Adrenal gland (tissue), 19 donors: ENCODE measurements at regions of chr10 and their contacts with region 1.

Region 1: GRCh38 chr10:25226775-25227682 is 52.2 kb downstream of the GPR158 start:
- DNase-seq: peak; percentile 24 to 67 (median 35)
- H3K4me3 ChIP-seq: no peak overlapping the region
- H3K27ac ChIP-seq: no peak overlapping the region
- H3K4me1 ChIP-seq: no peaks in the 10 kb centered on the region
- H3K27me3 ChIP-seq: no peaks in the 10 kb centered on the region
- CTCF ChIP-seq: peak; percentile 39 to 62 (median 54)
- POLR2A ChIP-seq: no peak

Region 2: GRCh38 chr10:24806262-24806661 is 420.8 kb before region 1 on chr10:
- intact Hi-C with region 1: no loop called
- DNase-seq: peak in 1 of 7 donors; percentile 24
- H3K4me3 ChIP-seq: no peak overlapping the region
- H3K27ac ChIP-seq: no peak overlapping the region
- H3K4me1 ChIP-seq: no peaks in the 10 kb centered on the region
- H3K27me3 ChIP-seq: no peaks in the 10 kb centered on the region
- CTCF ChIP-seq: no peak
- POLR2A ChIP-seq: no peak

Region 3: DNA sequence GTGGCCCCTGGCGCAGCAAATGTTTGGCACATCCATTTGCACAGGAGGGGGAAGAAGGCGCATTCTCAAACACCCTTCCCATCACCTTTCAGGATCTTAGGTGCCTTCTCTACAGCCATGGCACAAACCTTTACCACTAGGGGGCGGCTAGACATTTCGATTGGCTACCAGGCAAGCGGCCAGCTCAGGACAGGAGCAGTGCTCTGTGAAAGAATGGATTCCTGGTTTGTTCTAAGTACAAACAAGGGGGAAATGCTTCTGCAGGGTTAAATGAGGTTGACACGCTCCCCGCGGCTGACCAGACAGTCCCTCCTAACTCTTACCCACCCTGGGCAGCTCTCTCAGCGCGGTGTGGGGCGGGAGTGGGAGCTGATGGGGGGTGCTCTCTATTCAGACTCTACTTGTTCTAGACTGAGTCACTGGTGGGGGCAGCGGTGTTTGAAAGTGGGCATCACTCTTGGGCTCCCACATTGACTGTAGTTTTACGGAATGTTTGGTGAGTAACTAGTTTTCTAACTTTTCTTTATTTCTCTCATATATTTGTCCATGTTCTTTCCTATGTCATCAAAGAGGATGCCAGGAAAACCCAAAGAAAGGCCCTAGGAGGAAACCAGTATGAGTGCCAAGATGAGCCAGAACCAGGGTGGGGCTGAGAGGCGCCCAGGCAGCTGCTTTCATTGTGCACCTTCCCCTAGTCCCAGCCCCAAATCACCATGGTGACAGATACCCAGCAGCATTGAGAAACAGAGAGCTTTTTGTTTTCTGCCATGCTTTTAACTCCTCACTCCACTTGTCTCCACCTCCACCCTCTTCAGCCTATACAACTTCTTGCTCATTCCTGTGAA is 113.6 kb before region 1 on chr10:
- intact Hi-C with region 1: loop called in 1 of 2 experiments (anchors 5 kb)
- DNase-seq: peak; percentile 71 to 93 (median 85)
- H3K4me3 ChIP-seq: no peak overlapping the region
- H3K27ac ChIP-seq: no peak overlapping the region
- H3K4me1 ChIP-seq: no peaks in the 10 kb centered on the region
- H3K27me3 ChIP-seq: peaks cover 4% of the 10 kb centered on the region
- CTCF ChIP-seq: peak; percentile 53 to 72 (median 68)
- POLR2A ChIP-seq: no peak